ENCODE measurements at regions of chr14 and their contacts with region 1.

Region 1: GRCh38 chr14:96501742-96502617 is at the start of gene PAPOLA:
- DNase-seq: peak; percentile 97
- H3K4me3 Mint-ChIP-seq: peak within 1 kb of the TSS; percentile 87
- H3K27ac Mint-ChIP-seq: peak within 1 kb of the TSS; percentile 91
- H3K4me1 Mint-ChIP-seq: peaks cover 35% of the 10 kb centered on the region
- H3K27me3 Mint-ChIP-seq: peaks cover 6% of the 10 kb centered on the region
- total RNA-seq, gene PAPOLA: 161 to 173 TPM

Region 2: DNA sequence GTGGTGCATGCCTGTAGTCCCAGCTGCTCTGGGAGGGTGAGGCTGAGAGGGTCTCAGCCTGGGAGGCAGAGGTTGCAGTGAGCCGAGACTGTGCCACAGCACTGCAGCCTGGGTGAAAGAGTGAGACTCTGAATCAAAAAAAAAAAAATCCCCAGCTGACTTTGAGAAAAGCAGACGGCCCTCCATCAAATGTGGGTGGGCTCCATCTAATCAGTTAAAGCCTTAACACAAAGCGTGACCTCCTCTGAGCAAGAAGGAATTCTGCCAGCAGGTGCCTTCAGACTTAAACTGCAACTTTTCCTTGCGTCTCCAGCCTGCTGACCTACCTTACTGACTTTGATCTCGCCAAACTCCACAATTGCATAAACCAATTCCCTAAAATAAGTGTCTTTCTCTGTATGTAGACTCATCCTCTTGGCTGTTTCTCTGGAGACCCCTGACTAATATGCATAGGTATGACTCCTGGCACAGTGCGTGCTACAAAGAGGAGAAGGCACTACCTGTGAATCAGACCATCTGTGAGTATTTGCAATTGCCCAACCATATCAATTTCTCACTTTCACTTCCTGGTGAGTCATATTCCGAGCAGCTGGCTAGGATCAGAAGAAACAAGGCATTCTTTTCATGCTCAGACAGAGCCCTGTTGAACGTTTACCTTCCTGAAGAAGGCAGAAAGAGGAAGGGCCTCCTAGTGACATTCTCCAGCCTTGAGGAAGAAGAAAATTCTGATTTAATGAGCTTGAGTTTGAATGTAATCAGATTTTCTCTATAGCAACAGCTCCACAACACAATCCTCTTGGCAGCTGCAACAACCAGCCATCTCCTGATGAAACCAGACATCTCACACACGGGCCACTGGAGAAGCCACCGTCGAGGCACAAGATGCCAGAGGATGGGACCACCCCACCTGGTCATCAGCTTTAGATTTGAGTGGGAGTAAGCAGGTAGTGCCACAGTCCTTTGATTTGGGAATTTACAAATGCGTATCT is 1236.6 kb before region 1 on chr14:
- CTCF ChIA-PET with region 1: no interaction called
- POLR2A ChIA-PET with region 1: no interaction called
- intact Hi-C with region 1: loop called (anchors 10 kb)
- DNase-seq: peak; percentile 72
- H3K4me3 Mint-ChIP-seq: no peak overlapping the region
- H3K27ac Mint-ChIP-seq: no peak overlapping the region
- H3K4me1 Mint-ChIP-seq: peaks cover 46% of the 10 kb centered on the region
- H3K27me3 Mint-ChIP-seq: peaks cover 1% of the 10 kb centered on the region

Region 3: DNA sequence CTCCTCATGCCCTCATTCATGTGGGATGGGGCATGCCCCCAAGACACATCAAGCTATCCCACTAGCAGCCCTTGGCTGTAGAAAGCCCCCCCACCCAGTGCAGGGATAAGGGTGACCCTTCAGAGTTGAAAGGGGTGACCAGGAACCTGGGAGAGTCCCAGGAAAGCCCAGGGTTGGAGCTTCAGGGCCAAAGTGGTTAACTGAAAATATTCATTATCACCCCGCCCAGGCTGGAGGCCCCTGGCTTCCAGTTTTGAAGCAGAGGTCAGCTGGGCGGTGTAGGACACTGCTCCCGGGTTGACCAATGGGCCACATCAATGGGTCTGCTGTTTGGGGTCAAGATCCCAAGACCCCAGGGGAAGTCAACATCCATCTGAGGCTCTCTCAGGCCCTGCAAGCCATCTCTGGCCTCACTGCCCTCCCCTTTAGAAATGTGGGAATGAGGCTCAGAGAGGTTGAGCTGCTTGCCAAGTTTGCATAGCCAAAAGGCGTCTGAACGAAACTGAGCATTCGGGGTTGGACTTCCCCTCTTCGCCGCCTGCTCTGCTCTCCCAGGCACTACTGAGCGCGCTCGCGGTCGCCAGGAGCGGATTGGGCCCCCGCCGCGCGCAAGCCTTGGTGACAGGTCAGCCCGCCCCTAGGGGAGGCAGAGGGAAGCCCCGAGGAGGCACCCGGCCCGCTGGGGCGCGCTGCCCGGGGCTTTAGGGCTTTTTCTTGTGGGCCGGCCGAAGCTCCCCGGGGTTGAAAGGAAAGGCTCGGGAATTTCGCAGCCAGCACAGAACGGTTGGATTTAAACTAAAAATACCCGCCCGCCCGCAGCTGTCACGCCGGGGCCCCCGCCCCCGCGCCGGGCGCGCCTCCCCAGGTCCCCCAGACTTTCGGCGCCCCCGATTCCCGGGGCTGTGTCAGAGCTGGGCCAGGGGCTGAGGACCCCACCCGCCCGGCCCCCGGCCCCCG is 986.1 kb before region 1 on chr14:
- CTCF ChIA-PET with region 1: no interaction called
- POLR2A ChIA-PET with region 1: no interaction called
- intact Hi-C with region 1: loop called (anchors 5 kb)
- DNase-seq: peak; percentile 91
- H3K4me3 Mint-ChIP-seq: peak overlapping the region; percentile 90
- H3K27ac Mint-ChIP-seq: peak overlapping the region; percentile 93
- H3K4me1 Mint-ChIP-seq: peaks cover 71% of the 10 kb centered on the region
- H3K27me3 Mint-ChIP-seq: no peaks in the 10 kb centered on the region

Region 4: DNA sequence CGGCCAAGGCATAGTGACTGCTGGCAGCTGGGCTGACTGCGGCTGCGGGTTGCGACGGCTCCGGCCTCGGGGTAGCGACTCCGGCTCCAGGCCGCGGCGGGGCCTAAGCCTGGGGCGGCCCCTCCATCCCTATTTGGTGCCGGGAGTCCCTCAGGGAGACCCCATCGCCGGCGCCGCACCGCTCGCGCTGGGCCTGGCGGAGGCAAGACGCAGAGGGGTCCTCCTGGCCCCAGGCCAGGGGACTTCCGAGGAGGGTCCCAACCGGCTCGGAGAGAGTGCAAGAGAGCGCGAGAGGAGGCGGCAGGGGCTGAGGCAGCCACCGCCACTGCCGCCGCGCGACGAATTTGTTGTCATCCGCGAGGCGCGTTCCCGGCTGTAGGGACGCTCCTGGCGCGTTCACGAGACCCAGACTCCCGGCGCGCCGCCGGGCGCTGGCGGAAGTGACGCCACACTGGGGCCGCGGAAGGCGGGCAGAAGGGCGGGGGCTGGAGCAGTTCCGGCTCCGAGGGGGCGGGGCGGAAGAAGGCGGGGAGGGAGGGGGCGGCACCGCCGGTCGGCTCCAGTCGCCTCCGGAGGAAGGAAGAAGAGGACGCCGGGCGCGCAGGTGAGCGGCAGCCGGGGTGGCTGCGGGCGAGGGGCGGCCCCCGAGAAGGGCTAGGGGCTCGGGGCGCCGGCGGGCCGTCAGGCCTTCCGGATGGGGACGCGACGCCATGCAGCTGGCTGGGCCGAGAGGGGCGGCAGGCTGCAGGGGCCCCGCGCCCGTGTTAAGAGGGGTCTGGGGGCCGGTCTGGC is 138.8 kb before region 1 on chr14 and contains the starts of genes ATG2B and GSKIP:
- CTCF ChIA-PET with region 1: interaction called, 4 read pairs
- POLR2A ChIA-PET with region 1: no interaction called
- intact Hi-C with region 1: loop called (anchors 1 kb)
- DNase-seq: peak; percentile 98
- H3K4me3 Mint-ChIP-seq: peak within 1 kb of the TSS; percentile 83
- H3K27ac Mint-ChIP-seq: peak within 1 kb of the TSS; percentile 83
- H3K4me1 Mint-ChIP-seq: peaks cover 50% of the 10 kb centered on the region
- H3K27me3 Mint-ChIP-seq: no peaks in the 10 kb centered on the region
- total RNA-seq, gene ATG2B: 12.0 to 12.8 TPM
- total RNA-seq, gene GSKIP: 22.8 to 29.7 TPM

Region 5: GRCh38 chr14:96536807-96537206 is 34.8 kb after region 1 on chr14:
- CTCF ChIA-PET with region 1: interaction called, 3 read pairs
- POLR2A ChIA-PET with region 1: no interaction called
- intact Hi-C with region 1: loop called (anchors 2 kb)
- DNase-seq: no peak
- H3K4me3 Mint-ChIP-seq: no peak overlapping the region
- H3K27ac Mint-ChIP-seq: peak overlapping the region; percentile 20
- H3K4me1 Mint-ChIP-seq: peaks cover 9% of the 10 kb centered on the region
- H3K27me3 Mint-ChIP-seq: no peaks in the 10 kb centered on the region

Region 6: GRCh38 chr14:96796851-96797581 is 295.0 kb after region 1 on chr14 and contains the start of gene VRK1:
- CTCF ChIA-PET with region 1: no interaction called
- POLR2A ChIA-PET with region 1: no interaction called
- intact Hi-C with region 1: loop called (anchors 1 kb)
- DNase-seq: peak; percentile 96
- H3K4me3 Mint-ChIP-seq: peak within 1 kb of the TSS; percentile 93
- H3K27ac Mint-ChIP-seq: peak within 1 kb of the TSS; percentile 78
- H3K4me1 Mint-ChIP-seq: peaks cover 25% of the 10 kb centered on the region
- H3K27me3 Mint-ChIP-seq: peaks cover 8% of the 10 kb centered on the region
- total RNA-seq, gene VRK1: 76.9 to 77.4 TPM

Region 7: GRCh38 chr14:97198813-97199212 is 696.8 kb after region 1 on chr14:
- CTCF ChIA-PET with region 1: no interaction called
- POLR2A ChIA-PET with region 1: no interaction called
- intact Hi-C with region 1: no loop called
- DNase-seq: no peak
- H3K4me3 Mint-ChIP-seq: no peak overlapping the region
- H3K27ac Mint-ChIP-seq: no peak overlapping the region
- H3K4me1 Mint-ChIP-seq: no peaks in the 10 kb centered on the region
- H3K27me3 Mint-ChIP-seq: peaks cover 9% of the 10 kb centered on the region

Measured in activated CD4-positive, alpha-beta memory T cell treated with anti-CD3 and anti-CD28 coated beads for 36 hours (primary cell).